Activated CD4-positive, alpha-beta T cell treated with anti-CD3 and anti-CD28 coated beads, Interleukin-2, amount 10 ng/mL, durations not matched to agents 24 days and 14 days (primary cell): ENCODE measurements at regions of chr16 and their contacts with region 1.

Region 1: GRCh38 chr16:69565671-69566239 is at the start of gene NFAT5:
- DNase-seq: peak; percentile 98
- H3K4me3 Mint-ChIP-seq: peak within 1 kb of the TSS; percentile 99
- H3K27ac Mint-ChIP-seq: peak within 1 kb of the TSS; percentile 99
- H3K4me1 Mint-ChIP-seq: peaks cover 42% of the 10 kb centered on the region
- H3K27me3 Mint-ChIP-seq: no peaks in the 10 kb centered on the region
- total RNA-seq, gene NFAT5: 46.3 and 54.6 TPM in 2 replicates

Region 2: GRCh38 chr16:69339289-69340108 is 226.3 kb before region 1 on chr16 and contains the starts of genes COG8 and NIP7:
- intact Hi-C with region 1: loop called (anchors 10 kb)
- DNase-seq: peak; percentile 98
- H3K4me3 Mint-ChIP-seq: peak within 1 kb of the TSS; percentile 98
- H3K27ac Mint-ChIP-seq: peak within 1 kb of the TSS; percentile 99
- H3K4me1 Mint-ChIP-seq: peaks cover 40% of the 10 kb centered on the region
- H3K27me3 Mint-ChIP-seq: no peaks in the 10 kb centered on the region
- total RNA-seq, gene COG8: 44.1 and 44.6 TPM in 2 replicates
- total RNA-seq, gene NIP7: 81.2 and 84.8 TPM in 2 replicates

Region 3: DNA sequence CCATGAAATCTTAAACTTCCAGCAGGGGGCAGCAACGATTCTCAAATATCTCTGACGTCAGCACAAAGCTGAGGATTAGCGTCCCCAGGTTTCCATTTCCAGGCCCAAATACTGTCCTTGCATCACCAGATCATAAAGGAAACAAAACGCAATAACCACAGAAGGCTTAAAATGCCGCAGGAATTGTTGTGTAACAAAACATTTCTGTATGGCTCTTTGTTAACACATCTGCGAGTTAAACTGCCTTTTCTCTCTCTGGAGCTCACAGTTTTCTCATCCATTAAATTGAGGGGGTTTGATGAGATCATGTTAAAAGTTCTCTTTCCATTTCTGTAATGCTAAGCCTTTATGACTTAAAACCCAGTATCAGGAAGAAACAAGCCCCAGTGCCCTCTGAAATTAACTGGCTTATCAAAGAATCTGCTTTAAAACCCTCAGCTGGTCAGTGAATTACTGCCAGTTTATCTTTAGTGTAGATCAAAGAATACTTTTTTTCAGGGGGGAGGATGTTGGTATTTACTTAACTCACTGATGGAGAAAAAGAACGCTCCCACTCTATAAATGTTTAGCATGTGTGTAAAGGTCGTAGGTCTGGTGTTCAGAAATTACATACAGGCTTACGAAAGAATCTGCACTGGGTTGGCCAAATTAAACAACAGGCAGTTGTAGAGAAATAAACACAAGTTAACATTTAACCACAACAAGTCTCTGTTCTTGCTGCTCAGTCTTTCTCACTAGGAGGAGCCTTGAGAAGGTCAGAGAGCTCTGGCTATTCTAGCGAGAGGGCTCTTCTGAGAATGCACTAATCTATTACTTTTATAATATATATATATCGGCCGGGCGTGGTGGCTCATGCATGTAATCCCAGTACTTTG is 169.3 kb before region 1 on chr16:
- intact Hi-C with region 1: loop called (anchors 1 kb)
- DNase-seq: peak; percentile 92
- H3K4me3 Mint-ChIP-seq: peak overlapping the region; percentile 4
- H3K27ac Mint-ChIP-seq: peak overlapping the region; percentile 15
- H3K4me1 Mint-ChIP-seq: peaks cover 15% of the 10 kb centered on the region
- H3K27me3 Mint-ChIP-seq: peaks cover 3% of the 10 kb centered on the region

Region 4: DNA sequence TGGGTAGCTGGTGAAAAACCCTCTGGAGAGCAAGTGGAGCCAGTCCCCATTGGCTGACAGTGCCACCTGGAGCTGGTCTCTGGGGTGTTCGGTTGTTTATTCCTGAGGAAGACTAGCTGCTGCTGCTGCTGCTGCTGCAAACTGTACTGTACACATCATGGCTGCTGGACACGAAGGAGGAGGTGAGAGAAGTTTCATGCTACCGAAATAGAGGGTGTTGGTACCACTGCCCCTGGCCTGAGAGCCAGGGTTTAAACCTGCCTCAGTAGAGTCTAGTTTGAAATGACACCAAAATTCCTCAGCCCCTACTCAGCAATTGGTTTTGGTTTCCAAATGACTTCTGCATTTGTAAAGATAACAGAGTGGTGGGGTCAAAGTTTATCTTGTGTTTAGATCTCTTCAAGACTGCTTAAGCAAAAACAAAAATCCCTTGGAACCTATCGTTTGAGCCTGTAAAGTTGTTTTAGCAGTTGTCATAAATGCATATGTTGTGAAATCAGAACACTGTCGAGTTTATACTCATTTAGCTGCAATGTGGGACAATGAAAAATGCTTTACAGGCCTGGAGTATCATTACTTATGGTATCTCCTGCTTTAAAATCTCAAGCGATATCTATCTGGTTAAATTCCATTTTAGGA is 100.6 kb before region 1 on chr16:
- intact Hi-C with region 1: loop called (anchors 1 kb)
- DNase-seq: peak; percentile 78
- H3K4me3 Mint-ChIP-seq: peak overlapping the region; percentile 58
- H3K27ac Mint-ChIP-seq: peak overlapping the region; percentile 81
- H3K4me1 Mint-ChIP-seq: peaks cover 47% of the 10 kb centered on the region
- H3K27me3 Mint-ChIP-seq: no peaks in the 10 kb centered on the region

Region 5: GRCh38 chr16:69535123-69536050 is 30.4 kb before region 1 on chr16:
- intact Hi-C with region 1: loop called (anchors 1 kb)
- DNase-seq: no peak
- H3K4me3 Mint-ChIP-seq: no peak overlapping the region
- H3K27ac Mint-ChIP-seq: no peak overlapping the region
- H3K4me1 Mint-ChIP-seq: peaks cover 18% of the 10 kb centered on the region
- H3K27me3 Mint-ChIP-seq: no peaks in the 10 kb centered on the region

Region 6: DNA sequence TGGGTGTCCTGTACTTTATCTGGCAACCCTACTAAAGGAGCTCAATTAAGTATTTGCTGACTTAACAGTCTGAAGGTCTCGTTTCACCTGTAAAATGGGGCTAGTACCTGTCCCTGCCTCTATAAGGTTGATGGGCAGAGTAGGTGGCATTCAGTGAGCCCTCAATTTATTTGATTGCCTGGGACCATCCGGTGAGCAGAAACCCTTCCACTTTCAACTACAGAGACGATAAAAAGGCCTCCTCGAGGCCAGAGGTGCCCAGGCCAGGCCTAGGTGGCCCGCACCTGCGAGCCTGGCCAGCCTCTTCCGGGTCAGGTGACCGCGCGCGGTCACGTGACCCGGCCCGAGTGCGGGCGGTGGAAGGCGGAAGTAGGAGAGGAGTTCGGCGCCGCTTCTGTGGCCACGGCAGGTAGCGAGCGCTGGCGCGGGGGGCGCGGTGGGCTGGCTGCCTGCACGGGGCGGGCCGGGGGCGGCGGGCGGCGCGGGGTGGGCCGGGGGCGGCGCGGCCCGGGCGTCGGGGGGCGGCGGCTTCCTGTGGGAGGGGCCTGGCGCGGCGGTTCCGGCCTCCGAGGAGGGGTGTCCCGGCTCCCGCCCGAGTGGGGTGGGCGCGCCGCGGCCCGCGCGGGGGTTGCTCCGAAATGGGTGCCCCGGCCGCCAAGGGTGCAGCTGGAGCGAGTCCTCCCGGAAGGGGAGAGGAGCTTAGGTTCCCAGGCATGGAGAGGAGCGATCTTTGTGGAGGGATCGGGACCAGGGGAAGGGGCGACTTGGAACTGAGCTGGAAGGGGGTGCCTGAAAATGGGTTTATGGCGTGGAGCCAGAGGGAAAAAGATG is 196.4 kb after region 1 on chr16 and contains the start of gene WWP2:
- intact Hi-C with region 1: loop called (anchors 5 kb)
- DNase-seq: peak; percentile 92
- H3K4me3 Mint-ChIP-seq: peak within 1 kb of the TSS; percentile 94
- H3K27ac Mint-ChIP-seq: peak within 1 kb of the TSS; percentile 95
- H3K4me1 Mint-ChIP-seq: peaks cover 22% of the 10 kb centered on the region
- H3K27me3 Mint-ChIP-seq: no peaks in the 10 kb centered on the region
- total RNA-seq, gene WWP2: 51.7 and 57.5 TPM in 2 replicates

Region 7: DNA sequence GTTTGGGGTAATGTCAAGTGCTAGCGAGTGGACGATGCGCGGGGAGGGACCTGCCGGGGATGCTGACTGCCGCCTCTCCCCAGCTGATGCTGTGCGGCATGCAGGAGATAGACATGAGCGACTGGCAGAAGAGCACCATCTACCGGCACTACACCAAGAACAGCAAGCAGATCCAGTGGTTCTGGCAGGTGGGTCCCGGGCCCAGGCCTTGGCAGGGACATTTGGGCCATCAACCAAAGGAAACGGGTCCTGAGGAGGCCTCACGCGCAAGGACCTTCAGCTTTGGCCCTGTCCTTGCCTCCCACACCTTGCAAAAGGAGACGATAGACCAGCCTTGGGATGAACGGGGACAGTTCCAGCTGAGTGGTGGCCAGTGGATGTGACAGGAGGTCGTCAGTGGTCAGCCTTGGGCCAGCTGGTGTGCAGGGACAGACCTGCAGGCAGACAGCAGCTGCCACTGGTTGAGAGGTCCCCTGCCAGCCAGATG is 371.8 kb after region 1 on chr16:
- intact Hi-C with region 1: no loop called
- DNase-seq: no peak
- H3K4me3 Mint-ChIP-seq: no peak overlapping the region
- H3K27ac Mint-ChIP-seq: no peak overlapping the region
- H3K4me1 Mint-ChIP-seq: no peaks in the 10 kb centered on the region
- H3K27me3 Mint-ChIP-seq: no peaks in the 10 kb centered on the region